Tibial artery (tissue), 4 donors: ENCODE measurements at regions of chr20 and their contacts with region 1.

Region 1: DNA sequence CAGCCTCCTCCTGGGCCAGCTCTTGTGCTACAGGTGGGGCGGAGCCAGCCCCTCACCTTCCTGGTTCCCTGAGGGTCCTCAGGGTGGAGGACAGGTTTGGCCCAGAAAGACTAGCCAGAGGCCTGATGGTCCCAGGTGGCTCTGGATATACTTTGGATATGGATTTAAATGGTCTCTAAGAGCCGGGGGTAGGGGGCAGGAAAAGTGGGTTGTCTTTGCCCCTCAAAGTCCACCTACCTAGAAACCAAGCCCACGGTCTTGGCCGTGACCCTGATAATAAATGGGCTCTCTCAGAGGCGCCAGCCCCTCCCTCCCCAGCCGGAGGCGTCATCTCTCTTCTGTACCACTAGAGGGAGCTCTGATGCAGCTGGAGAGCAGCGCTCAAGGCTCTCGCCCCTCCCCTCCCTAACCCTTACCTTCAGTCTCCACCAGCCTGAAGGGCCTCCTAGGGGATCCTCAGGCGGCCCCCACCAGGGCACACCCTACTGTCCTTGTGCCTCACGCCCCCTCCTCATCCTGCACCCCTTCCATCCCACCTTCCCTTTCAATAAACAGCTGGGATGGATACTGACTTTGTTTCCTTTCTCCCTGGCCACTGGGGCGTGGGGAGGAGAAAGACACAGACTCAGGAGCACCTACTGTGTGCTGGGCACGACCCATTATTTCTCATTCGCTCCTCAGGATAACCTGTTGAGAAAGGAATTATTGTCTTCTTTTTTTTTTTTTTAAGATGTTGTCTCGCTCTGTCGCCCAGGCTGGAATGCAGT is 7.6 kb downstream of the NRSN2 start:
- DNase-seq: peak; percentile 61 to 80
- H3K4me3 ChIP-seq: no peak overlapping the region
- H3K27ac ChIP-seq: no peak overlapping the region
- H3K4me1 ChIP-seq: peaks cover 0 to 7% (median 3%) of the 10 kb centered on the region in 4 donors
- H3K27me3 ChIP-seq: no peaks in the 10 kb centered on the region
- CTCF ChIP-seq: peak; percentile 89 to 98

Region 2: DNA sequence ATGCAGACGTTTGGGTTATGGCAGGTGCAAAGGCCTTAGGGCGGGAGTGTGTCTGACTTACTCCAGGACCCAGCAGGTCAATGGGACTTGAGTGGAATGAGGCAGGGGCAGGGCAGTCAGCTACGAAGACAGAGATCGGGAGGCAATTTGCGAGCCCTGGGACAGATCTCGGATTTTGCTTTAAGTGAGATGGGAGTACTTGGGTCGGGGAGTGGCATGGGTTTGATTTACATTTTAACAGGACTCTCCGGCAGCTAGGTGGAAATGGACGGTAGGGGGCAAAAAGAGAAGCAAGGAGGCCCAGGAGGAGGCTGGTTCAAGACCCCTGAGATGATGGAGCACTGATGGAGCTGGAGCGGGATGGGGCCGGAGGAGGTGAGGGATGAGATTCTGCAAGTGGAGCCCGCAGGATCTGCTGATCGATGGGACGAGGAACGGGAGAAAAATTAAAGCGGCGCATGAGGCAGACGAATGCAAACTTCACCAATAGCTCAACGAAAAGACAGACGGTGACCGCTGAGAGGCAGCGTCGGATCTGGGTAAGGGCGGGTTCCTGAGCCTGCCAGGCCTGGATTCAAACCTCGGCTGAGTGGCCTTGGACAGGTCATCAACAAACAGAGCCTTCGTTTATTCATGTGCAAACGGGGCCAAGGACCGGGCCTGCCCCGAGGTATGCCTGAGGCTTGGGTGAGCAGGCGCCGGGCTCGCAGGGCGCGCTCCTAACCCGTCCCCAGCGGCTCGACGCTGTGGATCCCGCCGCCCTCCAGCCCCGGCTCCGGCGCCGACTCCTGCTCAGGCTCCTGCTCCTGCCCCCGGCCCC is 52.9 kb after region 1 on chr20:
- intact Hi-C with region 1: loop called (anchors 5 kb)
- DNase-seq: peak; percentile 75 to 87
- H3K4me3 ChIP-seq: peak overlapping the region; percentile 89 to 100
- H3K27ac ChIP-seq: peak overlapping the region; percentile 90 to 94
- H3K4me1 ChIP-seq: peaks cover 0 to 26% (median 16%) of the 10 kb centered on the region in 4 donors
- H3K27me3 ChIP-seq: no peaks in the 10 kb centered on the region
- CTCF ChIP-seq: no peak

Region 3: DNA sequence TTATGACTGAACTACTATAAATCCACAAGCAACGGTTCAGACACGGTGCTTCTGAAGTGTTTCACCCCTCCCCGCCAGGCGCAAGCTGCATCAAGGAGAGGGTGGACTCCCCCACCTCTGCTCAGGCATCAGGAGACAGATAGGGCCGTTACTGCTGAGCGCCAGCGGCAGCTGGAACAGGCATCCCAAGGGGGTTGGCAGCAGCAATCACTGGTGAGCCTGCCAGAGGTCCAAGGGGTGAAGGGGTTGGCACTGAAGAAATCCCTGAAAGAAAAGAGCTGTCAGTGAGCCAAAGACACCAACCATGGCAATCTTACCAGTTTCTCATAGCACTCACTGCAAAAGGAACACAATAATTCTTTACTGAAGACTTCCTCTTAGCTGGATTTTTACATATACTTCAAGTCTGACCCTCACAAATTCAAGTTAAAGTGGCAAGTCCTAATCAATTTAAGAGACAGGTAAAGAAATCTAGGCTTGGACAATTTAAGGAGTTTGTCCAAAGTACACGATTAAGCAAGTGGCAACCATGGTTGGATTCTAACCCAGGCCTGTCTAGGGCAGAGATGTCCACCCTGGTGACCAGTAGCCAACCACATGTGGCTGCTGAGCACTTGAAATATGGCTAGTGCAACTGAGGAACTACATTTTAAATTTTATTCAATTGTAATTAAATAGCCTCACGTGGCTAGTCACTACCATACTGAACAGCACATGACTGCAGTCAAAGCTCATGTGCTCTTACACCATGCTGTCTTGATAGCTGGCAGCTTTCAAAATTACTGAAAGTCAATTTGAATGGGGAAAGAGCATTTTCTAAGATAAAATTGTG is 129.5 kb after region 1 on chr20:
- intact Hi-C with region 1: loop called (anchors 5 kb)
- DNase-seq: peak in 1 of 2 donors; percentile 72
- H3K4me3 ChIP-seq: no peak overlapping the region
- H3K27ac ChIP-seq: no peak overlapping the region
- H3K4me1 ChIP-seq: peaks cover 0 to 20% (median 13%) of the 10 kb centered on the region in 4 donors
- H3K27me3 ChIP-seq: no peaks in the 10 kb centered on the region
- CTCF ChIP-seq: no peak

Region 4: DNA sequence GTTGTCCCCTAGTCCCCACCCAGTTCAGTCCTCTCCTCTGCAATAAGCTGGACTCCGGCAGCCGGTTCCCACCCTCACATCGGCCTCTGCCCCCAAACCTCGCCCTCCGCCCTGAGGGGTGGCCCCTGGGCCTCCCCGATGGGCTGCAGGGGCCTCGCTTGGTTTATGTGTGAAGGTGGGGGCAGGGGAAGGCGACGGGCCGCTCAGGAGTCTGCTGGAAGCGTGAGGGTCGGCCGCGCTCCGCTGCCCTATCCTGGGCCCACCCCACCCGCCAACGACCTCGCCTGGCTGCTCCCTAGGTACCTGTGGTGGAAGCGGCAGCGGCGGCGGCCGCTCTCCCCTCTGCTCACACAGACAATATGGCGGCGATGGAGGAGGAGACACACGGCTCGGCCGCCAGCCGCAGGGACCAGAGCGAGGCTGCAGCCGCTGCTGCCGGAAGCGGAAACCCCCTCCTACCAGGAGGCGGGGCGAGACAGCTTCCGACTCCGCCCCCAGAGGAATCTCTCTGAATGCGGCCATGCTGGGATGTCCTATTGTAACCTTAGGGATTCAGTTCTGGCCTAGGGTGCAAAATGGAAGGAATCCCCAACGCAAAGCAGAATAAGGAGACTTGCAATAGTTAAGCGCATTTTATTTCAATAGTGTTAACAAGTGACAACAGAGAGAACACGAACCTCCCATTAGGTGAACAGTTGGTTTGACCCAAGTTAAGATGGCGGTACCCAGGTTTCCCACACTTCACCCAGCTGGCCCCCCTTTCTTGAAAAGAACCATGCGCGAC is 189.1 kb after region 1 on chr20 and contains the start of gene CSNK2A1:
- intact Hi-C with region 1: loop called (anchors 10 kb)
- DNase-seq: peak; percentile 92 to 97
- H3K4me3 ChIP-seq: peak within 1 kb of the TSS; percentile 92 to 96
- H3K27ac ChIP-seq: peak within 1 kb of the TSS; percentile 90 to 94
- H3K4me1 ChIP-seq: peaks cover 0 to 50% (median 40%) of the 10 kb centered on the region in 4 donors
- H3K27me3 ChIP-seq: no peaks in the 10 kb centered on the region
- CTCF ChIP-seq: peak in 1 of 2 experiments; percentile 17

Region 5: DNA sequence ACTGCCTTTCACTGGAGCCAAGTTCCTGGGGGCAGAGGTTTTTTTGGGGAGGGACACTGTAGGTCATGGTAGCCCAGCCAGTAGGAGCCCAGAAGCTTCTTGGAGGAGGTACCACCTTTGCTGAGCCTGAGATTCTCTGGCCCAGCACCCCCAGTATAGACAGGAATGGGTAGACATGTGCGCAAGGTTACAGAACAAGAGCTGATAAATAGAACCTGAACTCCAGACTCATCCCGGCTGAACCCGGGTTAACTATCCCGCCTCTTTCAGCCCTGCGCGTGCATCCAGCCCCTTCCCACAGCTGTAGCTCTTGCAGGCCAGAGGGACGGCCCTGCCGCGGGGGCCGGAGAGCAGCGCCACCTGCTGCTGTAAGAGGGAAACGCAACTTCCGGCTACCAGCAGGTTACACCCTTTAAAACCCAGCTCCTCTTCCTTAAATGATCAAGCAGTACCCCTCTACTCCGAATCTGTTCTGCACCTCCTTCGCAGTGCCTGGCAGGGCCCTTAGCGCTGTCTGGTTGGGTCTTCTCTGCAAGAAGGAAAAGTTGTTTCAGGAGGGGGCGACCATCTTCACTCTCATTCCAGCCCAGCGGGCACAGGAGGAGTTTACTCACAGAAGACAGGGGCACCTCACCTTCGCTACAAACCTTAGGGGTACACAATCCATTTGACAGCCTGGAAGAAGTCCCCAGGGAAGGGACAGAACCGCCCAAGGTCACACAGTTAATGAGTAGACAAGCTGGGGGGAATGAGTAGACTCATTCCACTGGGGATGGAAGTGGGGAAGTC is 291.0 kb after region 1 on chr20:
- intact Hi-C with region 1: loop called (anchors 10 kb)
- DNase-seq: peak in 1 of 2 donors; percentile 76
- H3K4me3 ChIP-seq: no peak overlapping the region
- H3K27ac ChIP-seq: no peak overlapping the region
- H3K4me1 ChIP-seq: peaks cover 0 to 12% (median 8%) of the 10 kb centered on the region in 4 donors
- H3K27me3 ChIP-seq: peaks cover 0 to 22% of the 10 kb centered on the region in 2 donors
- CTCF ChIP-seq: peak; percentile 63 to 80

Region 6: DNA sequence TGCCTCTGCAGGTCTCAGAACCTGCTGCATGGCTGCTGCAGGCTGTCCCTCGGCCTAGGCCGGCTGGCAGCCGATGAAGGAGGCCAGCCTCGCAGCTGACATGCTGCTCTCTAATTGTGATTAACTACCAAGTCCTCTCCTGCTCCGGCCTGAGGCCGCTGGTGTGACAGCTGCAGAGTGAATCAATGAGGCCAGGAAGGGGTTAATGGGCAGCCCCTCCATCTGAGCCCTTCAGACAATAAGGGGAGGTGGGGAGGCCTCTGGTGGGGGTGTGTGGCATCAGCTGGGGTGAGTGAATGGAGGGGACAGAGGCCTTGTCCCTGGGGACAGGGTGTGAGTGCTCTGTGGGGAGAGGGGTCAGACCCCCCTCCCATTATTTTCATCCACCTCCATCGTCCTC is 379.4 kb after region 1 on chr20:
- intact Hi-C with region 1: loop called (anchors 10 kb)
- DNase-seq: no peak
- H3K4me3 ChIP-seq: no peak overlapping the region
- H3K27ac ChIP-seq: no peak overlapping the region
- H3K4me1 ChIP-seq: no peaks in the 10 kb centered on the region
- H3K27me3 ChIP-seq: peaks cover 0 to 31% of the 10 kb centered on the region in 2 donors
- CTCF ChIP-seq: no peak